A549 (cell line): ENCODE measurements at regions of chr3 and their contacts with region 1.

Region 1: GRCh38 chr3:53938645-53939044 is 47.0 kb upstream of the SELENOK start:
- DNase-seq: peak; percentile 30 to 44
- ATAC-seq: peak; percentile 81 to 83; a peak in 5 of 6 replicates
- H3K4me3 ChIP-seq: no peak overlapping the region
- H3K27ac ChIP-seq: no peak overlapping the region
- H3K4me1 ChIP-seq: no peaks in the 10 kb centered on the region
- CTCF ChIP-seq: peak; percentile 69
- EP300 ChIP-seq: no peak
- POLR2A ChIP-seq: no peak
- RAD21 ChIP-seq: peak; percentile 75 to 82

Region 2: GRCh38 chr3:53891497-53892285 is 47.0 kb before region 1 on chr3 and contains the start of gene SELENOK:
- CTCF ChIA-PET with region 1: no interaction called
- POLR2A ChIA-PET with region 1: no interaction called
- DNase-seq: peak; percentile 77 to 98
- ATAC-seq: peak; percentile 98 to 99
- H3K4me3 ChIP-seq: peak within 1 kb of the TSS; percentile 88
- H3K27ac ChIP-seq: peak within 1 kb of the TSS; percentile 79 to 92
- H3K4me1 ChIP-seq: peaks cover 14% of the 10 kb centered on the region; the same call in 2 of the 3 replicates
- CTCF ChIP-seq: no peak
- EP300 ChIP-seq: no peak
- POLR2A ChIP-seq: peak; percentile 49
- RAD21 ChIP-seq: no peak
- polyA plus RNA-seq, gene SELENOK: 46.6 and 54.3 TPM in 2 replicates

Region 3: DNA sequence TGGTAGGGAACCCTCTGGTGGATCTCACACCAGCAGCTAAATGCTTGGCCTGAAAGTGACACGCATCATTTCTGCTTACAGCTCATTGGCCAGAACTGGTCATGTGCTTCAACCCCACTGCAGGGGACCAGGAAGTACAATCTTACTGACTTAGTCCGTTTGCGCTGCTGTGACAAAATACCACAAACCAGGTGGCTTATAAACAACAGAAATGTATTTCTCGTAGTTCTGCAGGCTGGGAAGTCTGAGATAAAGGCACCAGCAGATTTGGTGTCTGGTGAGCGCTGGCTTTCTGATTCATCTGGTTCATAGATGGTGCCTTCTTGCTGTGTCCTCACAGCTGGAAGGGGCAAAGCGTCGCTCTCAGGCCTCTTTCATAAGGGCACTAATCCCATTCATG is 30.4 kb after region 1 on chr3:
- CTCF ChIA-PET with region 1: interaction called, 12 read pairs
- POLR2A ChIA-PET with region 1: no interaction called
- DNase-seq: no peak
- ATAC-seq: no peak
- H3K4me3 ChIP-seq: no peak overlapping the region
- H3K27ac ChIP-seq: no peak overlapping the region
- H3K4me1 ChIP-seq: no peaks in the 10 kb centered on the region
- CTCF ChIP-seq: no peak
- EP300 ChIP-seq: no peak
- POLR2A ChIP-seq: no peak
- RAD21 ChIP-seq: no peak

Region 4: GRCh38 chr3:54374214-54374855 is 435.7 kb after region 1 on chr3:
- CTCF ChIA-PET with region 1: interaction called, 12 read pairs
- POLR2A ChIA-PET with region 1: no interaction called
- DNase-seq: peak; percentile 5 to 10
- ATAC-seq: peak in 1 of 2 experiments; percentile 66; a peak in 2 of 6 replicates
- H3K4me3 ChIP-seq: no peak overlapping the region
- H3K27ac ChIP-seq: no peak overlapping the region
- H3K4me1 ChIP-seq: no peaks in the 10 kb centered on the region
- CTCF ChIP-seq: peak; percentile 11; the same call in 1 of the 3 replicates
- EP300 ChIP-seq: no peak
- POLR2A ChIP-seq: no peak
- RAD21 ChIP-seq: peak in 1 of 2 experiments; percentile 31; a peak in 1 of 5 replicates